ENCODE measurements at regions of chr15 and their contacts with region 1.

Region 1: DNA sequence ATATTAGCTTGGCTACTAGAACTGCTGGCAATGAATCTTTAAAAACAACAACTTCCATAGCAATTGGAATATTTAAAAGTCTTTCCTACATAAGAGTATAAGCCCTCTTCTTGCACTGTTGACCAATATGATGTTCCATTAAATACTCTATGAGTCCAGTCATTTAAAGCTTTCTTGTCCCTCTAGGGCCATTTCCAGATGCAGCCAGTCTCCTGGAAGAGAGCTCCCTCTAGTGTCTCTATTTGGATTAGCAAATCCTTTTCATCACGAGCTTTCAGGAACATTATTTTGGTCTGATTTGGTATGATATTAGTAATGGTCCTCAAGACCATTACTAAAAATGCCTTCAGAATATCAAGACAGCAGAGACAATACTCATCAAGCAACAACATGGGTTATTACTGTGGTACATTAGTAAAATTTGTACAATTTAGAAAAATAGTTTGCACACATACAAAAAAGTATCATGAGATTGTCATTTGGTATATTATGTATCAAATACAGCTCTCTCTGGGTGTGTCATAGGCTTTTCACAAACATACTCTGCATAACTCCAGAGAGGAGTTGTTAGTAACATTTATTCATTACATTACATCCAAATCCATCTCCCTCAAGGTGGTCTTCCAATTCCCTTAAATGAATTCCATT is 101.3 kb downstream of the DPH6 start:
- DNase-seq: no peak
- ATAC-seq: no peak

Region 2: DNA sequence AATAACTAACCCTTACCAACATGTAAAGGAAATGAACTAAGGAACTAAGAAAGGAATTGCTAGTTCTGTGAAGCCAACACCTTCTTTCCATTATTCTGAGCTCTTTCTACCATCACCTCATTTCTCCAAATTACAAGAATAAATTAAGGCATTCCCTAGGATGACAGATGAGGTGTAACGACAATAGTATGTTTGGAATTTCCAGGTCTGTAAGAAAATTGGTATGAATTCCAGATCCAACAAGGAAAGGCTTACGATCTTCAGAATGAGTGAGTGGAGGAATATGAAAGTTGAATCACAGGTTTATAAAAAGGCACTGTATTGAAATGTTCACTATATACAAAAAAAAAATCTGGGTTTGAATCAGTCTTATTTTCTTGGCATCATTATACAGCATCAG is 355.1 kb before region 1 on chr15:
- intact Hi-C with region 1: loop called (anchors 10 kb)
- DNase-seq: no peak
- ATAC-seq: no peak

Region 3: DNA sequence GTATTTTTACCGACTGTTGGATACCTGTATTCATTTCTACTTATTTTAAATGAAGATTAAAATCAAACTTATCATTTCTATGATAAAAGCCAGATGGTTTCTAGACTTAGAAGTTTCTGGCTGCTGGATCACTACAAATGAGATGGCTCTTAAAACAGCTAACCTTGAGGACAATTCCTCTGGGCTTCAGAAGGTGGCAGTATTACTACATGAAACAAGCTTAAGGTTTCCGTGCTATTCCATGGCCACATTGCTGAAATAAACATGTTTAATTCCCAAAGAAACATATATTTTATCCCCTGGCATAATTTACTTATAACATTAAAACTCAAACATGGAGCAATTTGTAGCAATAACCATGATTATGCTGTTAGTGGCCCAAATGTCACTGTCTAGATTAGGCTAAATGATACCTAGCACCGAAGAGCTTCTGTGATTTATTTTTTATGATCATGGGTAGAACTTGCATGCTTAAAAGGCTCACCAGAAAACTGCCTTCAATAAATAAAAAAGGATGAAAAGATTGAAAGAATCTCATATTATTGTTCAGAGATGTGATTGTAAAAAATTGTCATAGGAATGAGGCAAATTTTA is 155.6 kb before region 1 on chr15:
- intact Hi-C with region 1: loop called (anchors 1 kb)
- DNase-seq: no peak
- ATAC-seq: no peak

Measured in Right ventricle myocardium inferior (tissue), 1 donor.